HCT116 (cell line): ENCODE measurements at regions of chr16 and their contacts with region 1.

Region 1: DNA sequence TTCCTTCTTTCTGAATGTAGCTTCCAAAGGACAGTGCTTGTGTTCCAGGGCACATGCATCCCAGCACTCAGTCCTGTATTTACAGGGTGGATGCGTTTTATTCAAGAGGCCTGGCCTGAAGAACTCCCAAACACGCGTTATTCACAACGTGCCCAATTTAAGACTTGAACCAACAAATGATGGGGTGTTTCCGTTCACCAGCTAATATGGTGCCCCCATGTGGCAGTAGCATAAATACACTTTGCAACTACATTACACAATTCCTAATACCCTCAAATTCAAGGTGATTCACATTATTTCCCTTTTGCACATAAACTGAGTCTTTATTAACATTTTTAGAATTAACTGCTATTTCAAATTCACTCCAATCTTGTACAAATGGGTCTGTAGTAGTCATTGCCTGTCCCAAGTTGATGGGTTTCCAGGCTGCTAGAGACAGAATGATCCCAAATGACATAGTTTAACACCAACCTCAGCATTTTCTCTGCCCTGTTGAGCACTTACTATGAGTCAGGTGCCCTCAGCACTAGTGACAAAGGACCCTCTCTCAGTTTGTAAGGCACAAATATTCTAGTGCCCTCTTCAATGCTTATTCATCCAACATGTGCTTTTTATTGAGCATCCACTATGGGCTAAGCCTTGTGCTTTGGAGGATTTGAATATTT is 26.9 kb downstream of the HSD17B2 start:
- DNase-seq: peak; percentile 64
- ATAC-seq: peak; percentile 85
- H3K4me3 ChIP-seq: no peak overlapping the region
- H3K27ac ChIP-seq: no peak overlapping the region
- H3K4me1 ChIP-seq: no peaks in the 10 kb centered on the region
- H3K27me3 ChIP-seq: peaks cover 54% of the 10 kb centered on the region
- CTCF ChIP-seq: peak; percentile 74 to 88 (median 77)
- POLR2A ChIP-seq: no peak
- RAD21 ChIP-seq: peak; percentile 81

Region 2: DNA sequence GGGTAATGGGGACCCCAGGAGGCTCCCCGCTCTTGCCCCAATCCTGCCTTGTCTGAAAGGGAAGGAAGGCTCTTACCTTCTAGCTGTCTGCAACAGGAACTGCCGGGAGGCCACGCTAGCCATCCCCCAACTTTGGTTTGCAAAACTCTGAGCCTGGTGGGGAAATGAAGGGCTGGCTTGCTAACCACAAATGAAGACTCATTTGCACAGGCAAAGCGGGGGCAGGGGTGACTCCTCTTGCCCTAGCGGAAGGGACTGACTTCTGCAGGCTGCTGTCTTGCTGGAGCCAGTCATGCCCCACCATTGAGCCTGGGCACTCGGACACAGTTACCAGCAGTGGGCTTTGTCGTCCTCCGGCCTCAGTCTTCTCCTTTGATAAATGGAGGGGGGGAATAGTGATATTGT is 230.3 kb before region 1 on chr16:
- CTCF ChIA-PET with region 1: no interaction called
- POLR2A ChIA-PET with region 1: no interaction called
- RAD21 ChIA-PET with region 1: no interaction called
- intact Hi-C with region 1: no loop called
- DNase-seq: no peak
- ATAC-seq: no peak
- H3K4me3 ChIP-seq: no peak overlapping the region
- H3K27ac ChIP-seq: no peak overlapping the region
- H3K4me1 ChIP-seq: peaks cover 17 to 45% of the 10 kb centered on the region in 2 experiments
- H3K27me3 ChIP-seq: no peaks in the 10 kb centered on the region
- CTCF ChIP-seq: no peak
- POLR2A ChIP-seq: no peak
- RAD21 ChIP-seq: no peak

Region 3: DNA sequence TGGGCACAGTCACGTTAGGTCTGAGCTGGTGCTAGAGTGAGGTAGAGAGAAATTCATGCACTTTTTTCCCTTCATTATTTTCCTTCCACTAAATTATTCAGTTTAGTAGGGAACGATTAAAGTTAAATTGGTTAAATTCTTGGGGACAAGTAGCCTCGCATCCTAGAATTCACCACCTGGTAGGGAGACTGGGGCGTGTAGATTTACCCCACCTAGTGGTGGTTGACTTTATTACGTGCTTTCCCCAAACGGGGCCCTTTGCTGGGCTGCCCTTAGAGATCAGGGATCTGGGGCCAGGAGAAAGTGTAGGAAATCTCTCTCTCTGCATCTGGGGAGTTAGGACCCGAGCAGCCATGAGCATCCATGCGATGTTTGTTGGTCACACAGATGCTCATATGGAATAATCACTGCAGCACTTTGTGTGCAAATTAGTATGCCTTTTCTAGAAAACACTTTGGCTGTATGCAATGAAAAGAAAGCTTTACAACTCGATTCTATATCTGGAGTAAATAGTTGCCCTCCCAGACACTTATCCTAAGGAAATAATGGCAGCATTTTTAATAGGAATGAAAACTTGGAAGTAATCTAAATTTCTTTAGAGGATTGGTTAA is 175.9 kb before region 1 on chr16:
- CTCF ChIA-PET with region 1: interaction called, 9 read pairs
- POLR2A ChIA-PET with region 1: no interaction called
- RAD21 ChIA-PET with region 1: no interaction called
- intact Hi-C with region 1: loop called (anchors 1 kb)
- DNase-seq: peak; percentile 40
- ATAC-seq: peak; percentile 89
- H3K4me3 ChIP-seq: no peak overlapping the region
- H3K27ac ChIP-seq: no peak overlapping the region
- H3K4me1 ChIP-seq: no peaks in the 10 kb centered on the region
- H3K27me3 ChIP-seq: no peaks in the 10 kb centered on the region
- CTCF ChIP-seq: peak; percentile 67 to 89 (median 87); a peak in 5 of 6 replicates
- POLR2A ChIP-seq: no peak
- RAD21 ChIP-seq: peak; percentile 68

Region 4: DNA sequence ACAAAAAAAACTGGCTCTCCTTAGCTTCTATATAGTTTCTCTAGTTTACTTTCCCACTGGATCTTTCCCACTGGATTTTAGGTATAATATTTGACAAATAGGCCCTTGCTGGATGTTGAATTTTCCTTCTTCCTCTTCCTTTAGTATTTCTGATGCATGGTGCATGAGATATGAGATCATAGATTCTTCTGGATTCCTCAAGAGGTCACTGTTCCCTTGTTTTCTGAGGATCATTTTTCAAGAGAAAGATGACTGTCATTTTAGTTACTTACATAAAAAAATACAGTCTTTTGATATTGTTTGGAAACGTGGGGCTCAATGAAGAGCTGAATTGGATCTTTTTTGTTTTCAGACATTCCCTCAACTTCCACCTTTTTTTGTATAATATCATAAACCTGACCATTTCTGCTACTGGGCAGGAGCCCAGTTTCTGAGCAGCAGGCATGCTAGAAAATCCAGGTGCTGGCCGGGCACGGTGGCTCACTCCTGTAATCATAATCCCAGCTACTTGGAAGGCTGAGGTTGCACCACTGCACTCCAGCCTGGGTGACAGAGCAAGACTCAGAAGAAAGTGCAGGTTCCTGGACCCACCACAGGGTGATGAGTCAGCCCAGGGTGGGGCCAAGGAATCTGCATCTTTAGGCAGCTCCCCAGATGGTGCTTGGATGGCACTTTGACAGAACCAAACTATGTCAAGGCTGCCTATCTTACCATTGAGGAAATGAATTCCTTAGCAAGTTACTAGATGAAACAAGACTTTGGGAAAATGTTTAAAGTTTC is 121.0 kb before region 1 on chr16:
- CTCF ChIA-PET with region 1: interaction called, 16 read pairs
- POLR2A ChIA-PET with region 1: no interaction called
- RAD21 ChIA-PET with region 1: no interaction called
- intact Hi-C with region 1: loop called (anchors 1 kb)
- DNase-seq: peak; percentile 57
- ATAC-seq: peak; percentile 88
- H3K4me3 ChIP-seq: no peak overlapping the region
- H3K27ac ChIP-seq: no peak overlapping the region
- H3K4me1 ChIP-seq: peaks cover 8 to 11% of the 10 kb centered on the region in 2 experiments; a peak in 3 of 4 replicates
- H3K27me3 ChIP-seq: no peaks in the 10 kb centered on the region
- CTCF ChIP-seq: peak; percentile 59 to 87 (median 81)
- POLR2A ChIP-seq: no peak
- RAD21 ChIP-seq: peak; percentile 83

Region 5: DNA sequence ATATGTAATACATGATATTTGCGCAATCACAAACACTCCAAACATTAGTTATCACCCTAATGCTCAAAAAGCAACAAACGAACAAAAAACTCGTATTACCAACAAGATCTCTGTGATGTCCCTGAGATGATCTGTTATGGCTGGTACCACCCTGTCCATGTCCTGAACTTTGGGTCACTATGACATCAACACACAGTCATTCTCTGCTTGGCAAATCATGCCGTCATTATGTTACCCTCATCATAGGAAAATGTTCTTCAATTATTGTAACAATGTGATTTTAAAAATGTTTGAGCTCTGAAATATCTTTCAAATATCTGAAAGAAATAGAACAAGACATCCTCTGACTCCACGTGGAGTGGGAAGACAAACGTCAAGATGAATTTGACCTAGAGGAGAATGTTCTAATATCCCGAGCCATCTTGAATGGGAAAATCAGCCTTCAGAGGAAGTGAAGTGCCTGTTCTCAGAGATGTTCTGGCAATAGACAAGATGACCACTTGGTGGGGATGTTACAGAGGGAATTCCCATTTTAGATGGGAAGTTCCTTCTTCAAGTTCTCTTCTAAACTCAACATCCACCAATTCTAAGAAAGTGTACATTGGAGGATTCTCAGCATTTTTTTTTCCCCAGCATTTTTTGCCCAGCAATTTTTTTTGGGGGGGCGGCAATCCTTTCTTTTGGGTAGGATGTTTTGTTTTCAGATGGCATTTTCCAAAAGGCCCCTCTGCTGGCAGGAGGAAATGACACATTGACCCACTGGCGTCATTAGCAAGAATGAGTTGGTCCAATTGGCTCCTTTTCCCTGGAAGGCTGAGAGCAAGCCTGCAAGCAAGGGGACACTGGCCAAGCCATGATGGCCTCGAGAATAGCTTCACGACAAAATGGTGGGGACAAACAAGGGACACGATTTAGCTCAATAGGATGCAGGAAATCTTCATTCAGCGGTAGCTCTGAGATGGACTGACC is 30.6 kb before region 1 on chr16:
- CTCF ChIA-PET with region 1: no interaction called
- POLR2A ChIA-PET with region 1: interaction called, 3 read pairs
- RAD21 ChIA-PET with region 1: no interaction called
- intact Hi-C with region 1: loop called (anchors 1 kb)
- DNase-seq: peak; percentile 62
- ATAC-seq: peak; percentile 81
- H3K4me3 ChIP-seq: no peak overlapping the region
- H3K27ac ChIP-seq: no peak overlapping the region
- H3K4me1 ChIP-seq: peaks cover 0 to 15% of the 10 kb centered on the region in 2 experiments; a peak in 2 of 4 replicates
- H3K27me3 ChIP-seq: peaks cover 29% of the 10 kb centered on the region
- CTCF ChIP-seq: peak; percentile 75 to 79 (median 78)
- POLR2A ChIP-seq: no peak
- RAD21 ChIP-seq: peak; percentile 80

Region 6: DNA sequence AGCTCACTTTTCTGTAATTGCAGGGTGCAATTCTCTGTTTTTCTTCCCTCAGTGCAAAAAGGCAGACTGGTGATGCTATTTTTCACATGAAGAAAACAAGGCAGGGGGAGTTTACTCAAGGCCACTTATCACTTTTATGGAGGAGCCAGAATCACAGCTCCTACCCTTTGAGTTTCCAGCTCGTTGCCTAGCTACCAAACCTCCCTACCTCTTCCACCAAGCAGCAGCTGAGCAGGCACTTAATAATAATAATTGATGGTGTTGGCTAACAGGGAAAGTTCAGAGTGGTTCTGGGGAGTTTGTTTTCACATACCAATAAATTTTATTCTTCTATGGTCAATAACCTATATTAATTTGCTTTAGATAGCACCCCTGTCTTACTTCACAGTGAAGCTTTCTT is 139.9 kb after region 1 on chr16:
- CTCF ChIA-PET with region 1: no interaction called
- POLR2A ChIA-PET with region 1: no interaction called
- RAD21 ChIA-PET with region 1: no interaction called
- intact Hi-C with region 1: no loop called
- DNase-seq: no peak
- ATAC-seq: no peak
- H3K4me3 ChIP-seq: no peak overlapping the region
- H3K27ac ChIP-seq: no peak overlapping the region
- H3K4me1 ChIP-seq: no peaks in the 10 kb centered on the region
- H3K27me3 ChIP-seq: peaks cover 16% of the 10 kb centered on the region
- CTCF ChIP-seq: no peak
- POLR2A ChIP-seq: no peak
- RAD21 ChIP-seq: no peak

Region 7: GRCh38 chr16:82470620-82471152 is 408.7 kb after region 1 on chr16:
- CTCF ChIA-PET with region 1: no interaction called
- POLR2A ChIA-PET with region 1: no interaction called
- RAD21 ChIA-PET with region 1: no interaction called
- intact Hi-C with region 1: no loop called
- DNase-seq: no peak
- ATAC-seq: no peak
- H3K4me3 ChIP-seq: no peak overlapping the region
- H3K27ac ChIP-seq: no peak overlapping the region
- H3K4me1 ChIP-seq: no peaks in the 10 kb centered on the region
- H3K27me3 ChIP-seq: peaks cover 45% of the 10 kb centered on the region; the same call in 1 of the 2 replicates
- CTCF ChIP-seq: no peak
- POLR2A ChIP-seq: no peak
- RAD21 ChIP-seq: no peak